Activated CD4-positive, alpha-beta T cell treated with anti-CD3 and anti-CD28 coated beads, Interleukin-2, amount 10 ng/mL, durations not matched to agents 7 days and 5 days (primary cell): ENCODE measurements at regions of chr16 and their contacts with region 1.

Region 1: DNA sequence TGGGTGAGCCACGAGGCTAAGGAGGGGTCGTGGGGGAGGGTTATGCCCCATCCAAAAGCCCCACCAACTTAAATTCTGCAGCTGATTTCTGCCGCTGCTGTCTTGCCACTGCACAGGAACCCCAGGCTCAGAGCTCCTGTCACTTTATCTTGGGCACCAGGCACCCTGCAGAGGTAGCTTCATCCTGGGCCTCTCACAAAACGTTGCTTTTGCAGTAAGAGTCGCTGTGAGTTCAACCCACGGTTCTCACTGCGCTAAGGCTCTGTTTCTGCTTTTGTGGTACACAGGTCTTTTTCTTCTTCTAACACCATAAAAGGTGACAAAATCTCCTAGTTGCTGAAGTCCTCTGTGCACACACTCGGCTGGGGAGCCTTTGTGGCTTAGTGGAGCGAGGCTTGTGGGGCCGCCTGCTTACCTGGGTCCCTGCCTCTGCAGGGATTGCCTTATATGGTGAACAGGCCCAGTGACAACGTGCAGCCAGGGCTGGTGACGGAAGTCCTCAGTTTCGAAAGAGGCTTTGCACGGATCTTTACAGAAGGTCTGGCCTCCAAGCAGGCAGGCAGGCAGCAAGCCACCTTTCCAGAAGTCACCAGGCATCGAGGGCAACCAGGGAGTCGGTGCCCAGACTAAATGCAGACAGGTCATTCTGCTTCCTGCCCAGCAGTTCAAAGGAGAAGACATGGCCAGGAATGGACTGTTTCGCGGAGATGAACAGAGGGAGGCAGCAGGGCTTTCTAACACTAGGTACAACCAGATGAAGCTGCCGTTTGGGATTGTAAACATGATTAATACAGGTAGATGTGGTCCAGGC is 10.4 kb upstream of the MEAK7 start:
- DNase-seq: peak; percentile 95
- H3K4me3 Mint-ChIP-seq: peak overlapping the region; percentile 49
- H3K27ac Mint-ChIP-seq: peak overlapping the region; percentile 98
- H3K4me1 Mint-ChIP-seq: peaks cover 88% of the 10 kb centered on the region
- H3K27me3 Mint-ChIP-seq: no peaks in the 10 kb centered on the region

Region 2: DNA sequence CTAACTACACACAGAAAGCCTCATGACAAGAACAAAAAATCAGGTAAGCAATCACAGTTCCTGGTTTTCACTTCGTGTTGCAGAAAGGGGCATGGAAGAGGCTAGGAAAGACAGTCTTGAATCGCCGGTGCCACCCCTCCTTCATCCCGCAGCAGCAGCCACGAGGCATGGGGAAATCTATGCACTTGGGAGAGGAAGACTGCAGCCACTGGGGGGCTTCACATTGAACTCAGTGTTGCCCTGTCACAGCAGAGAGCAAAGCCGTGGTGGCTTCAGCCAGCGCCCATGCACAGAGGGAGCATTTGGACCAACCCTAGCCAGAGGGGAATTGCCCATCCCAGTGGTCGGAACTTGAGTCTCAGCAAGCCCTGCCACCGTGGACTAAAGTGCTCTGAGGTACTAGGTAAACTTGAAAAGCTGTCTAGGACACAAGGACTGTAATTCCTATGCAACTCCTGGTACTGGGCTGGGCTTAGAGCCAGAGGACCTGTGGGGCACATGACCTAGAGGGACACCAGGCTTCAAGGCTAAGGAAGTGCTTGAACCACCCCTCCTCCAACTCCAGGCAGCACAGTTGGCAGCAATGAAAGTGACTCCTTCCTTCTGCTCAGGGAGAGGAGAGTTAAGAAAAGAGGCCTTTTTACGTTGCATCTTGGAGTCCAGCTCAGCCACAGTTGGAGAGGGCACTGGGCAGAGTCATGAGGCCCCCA is 181.8 kb before region 1 on chr16:
- CTCF ChIA-PET with region 1: no interaction called
- POLR2A ChIA-PET with region 1: no interaction called
- DNase-seq: no peak
- H3K4me3 Mint-ChIP-seq: no peak overlapping the region
- H3K27ac Mint-ChIP-seq: no peak overlapping the region
- H3K4me1 Mint-ChIP-seq: no peaks in the 10 kb centered on the region
- H3K27me3 Mint-ChIP-seq: peaks cover 4% of the 10 kb centered on the region

Region 3: GRCh38 chr16:84504420-84505248 is 10.2 kb before region 1 on chr16 and contains the start of gene MEAK7:
- CTCF ChIA-PET with region 1: interaction called, 12 read pairs
- POLR2A ChIA-PET with region 1: interaction called, 5 read pairs
- DNase-seq: peak; percentile 98
- H3K4me3 Mint-ChIP-seq: peak within 1 kb of the TSS; percentile 88
- H3K27ac Mint-ChIP-seq: peak within 1 kb of the TSS; percentile 90
- H3K4me1 Mint-ChIP-seq: peaks cover 62% of the 10 kb centered on the region
- H3K27me3 Mint-ChIP-seq: peaks cover 3% of the 10 kb centered on the region
- total RNA-seq, gene MEAK7: 8.8 to 10.0 TPM

Region 4: DNA sequence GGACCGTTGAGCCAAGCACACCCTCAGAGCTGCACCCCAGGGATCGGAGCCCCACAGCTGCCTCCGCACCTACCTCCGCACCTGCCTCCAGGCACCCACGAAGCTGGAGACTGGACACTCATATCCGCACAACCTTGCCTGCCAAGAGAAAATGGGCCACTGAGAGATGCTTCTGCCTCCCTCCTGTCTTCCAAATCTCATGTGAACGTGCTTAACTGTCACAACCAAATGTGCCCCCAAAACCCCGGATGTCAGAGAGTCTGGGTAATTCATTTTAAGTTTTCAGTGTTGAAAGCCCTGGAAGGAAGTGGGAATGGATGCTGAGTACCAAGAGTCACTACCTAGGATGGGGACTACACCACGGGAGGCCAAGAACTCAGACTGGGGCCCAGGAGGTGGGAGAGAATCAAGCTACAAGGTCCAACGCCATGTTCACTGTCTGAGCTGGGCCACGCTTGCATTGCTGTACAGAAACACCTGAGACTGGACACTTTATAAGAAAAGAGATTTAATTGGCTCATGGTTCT is 39.1 kb after region 1 on chr16:
- CTCF ChIA-PET with region 1: interaction called, 17 read pairs
- POLR2A ChIA-PET with region 1: no interaction called
- DNase-seq: no peak
- H3K4me3 Mint-ChIP-seq: no peak overlapping the region
- H3K27ac Mint-ChIP-seq: no peak overlapping the region
- H3K4me1 Mint-ChIP-seq: peaks cover 41% of the 10 kb centered on the region
- H3K27me3 Mint-ChIP-seq: peaks cover 4% of the 10 kb centered on the region